Activated B cell treated with CpG ODN at 0.5 μM for 24 hours (primary cell): ENCODE measurements at regions of chr5 and their contacts with region 1.

Region 1: DNA sequence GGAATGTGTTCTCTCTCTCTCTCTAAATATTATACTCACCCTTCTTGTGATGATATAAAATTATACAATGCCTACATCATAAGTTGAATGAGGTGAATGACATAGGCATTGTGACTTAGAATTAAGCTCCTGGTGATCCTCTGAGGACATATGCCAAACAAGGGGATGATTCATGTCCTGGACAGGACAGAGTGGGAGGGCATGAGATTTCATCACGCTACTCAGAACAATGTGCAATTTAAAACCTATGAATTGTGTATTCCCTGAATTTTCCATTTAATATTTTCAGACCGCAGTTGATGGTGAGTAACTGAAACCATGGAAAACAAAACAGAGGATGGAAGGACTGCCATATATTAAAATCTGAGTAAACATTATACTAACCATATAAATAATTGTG is 782.2 kb upstream of the NUDT12 start:
- DNase-seq: no peak
- ATAC-seq: no peak
- H3K4me3 Mint-ChIP-seq: no peak overlapping the region
- H3K27ac Mint-ChIP-seq: no peak overlapping the region
- H3K4me1 Mint-ChIP-seq: no peaks in the 10 kb centered on the region
- H3K27me3 Mint-ChIP-seq: no peaks in the 10 kb centered on the region
- CTCF ChIP-seq: no peak

Region 2: GRCh38 chr5:104297076-104297475 is 47.7 kb before region 1 on chr5:
- CTCF ChIA-PET with region 1: no interaction called
- POLR2A ChIA-PET with region 1: no interaction called
- intact Hi-C with region 1: no loop called
- DNase-seq: no peak
- ATAC-seq: no peak
- H3K4me3 Mint-ChIP-seq: no peak overlapping the region
- H3K27ac Mint-ChIP-seq: no peak overlapping the region
- H3K4me1 Mint-ChIP-seq: no peaks in the 10 kb centered on the region
- H3K27me3 Mint-ChIP-seq: no peaks in the 10 kb centered on the region
- CTCF ChIP-seq: no peak

Region 3: DNA sequence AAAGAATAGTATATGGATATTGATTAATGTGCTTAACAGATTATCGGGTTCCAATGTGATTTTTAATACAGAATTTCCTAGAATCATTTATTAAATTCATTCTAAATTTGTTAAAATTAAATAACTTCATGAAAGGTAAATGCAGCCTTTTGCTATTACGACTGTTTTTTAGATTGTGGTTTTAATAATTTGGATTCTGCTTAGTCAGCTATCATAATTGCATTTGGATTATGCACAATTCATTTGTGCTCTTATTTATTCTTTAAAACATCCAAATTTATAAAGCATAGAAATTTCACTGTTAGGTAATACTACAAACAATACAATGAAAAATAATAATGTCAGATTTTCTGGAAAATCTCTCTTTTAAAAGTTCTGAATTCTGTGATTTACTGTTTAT is 1727.4 kb after region 1 on chr5:
- CTCF ChIA-PET with region 1: no interaction called
- POLR2A ChIA-PET with region 1: no interaction called
- intact Hi-C with region 1: loop called (anchors 5 kb)
- DNase-seq: no peak
- ATAC-seq: no peak
- H3K4me3 Mint-ChIP-seq: no peak overlapping the region
- H3K27ac Mint-ChIP-seq: no peak overlapping the region
- H3K4me1 Mint-ChIP-seq: no peaks in the 10 kb centered on the region
- H3K27me3 Mint-ChIP-seq: no peaks in the 10 kb centered on the region
- CTCF ChIP-seq: no peak